ENCODE measurements at regions of chrX and their contacts with region 1.

Region 1: GRCh38 chrX:70433848-70434351 is 10.7 kb upstream of the DLG3 start:
- DNase-seq: peak; percentile 53 to 70
- ATAC-seq: peak; percentile 70 to 84
- H3K4me3 ChIP-seq: peak overlapping the region; percentile 72
- H3K27ac ChIP-seq: peak overlapping the region; percentile 78 to 88
- H3K4me1 ChIP-seq: peaks cover 9% of the 10 kb centered on the region; the same call in 1 of the 3 replicates
- CTCF ChIP-seq: peak; percentile 65
- EP300 ChIP-seq: no peak
- POLR2A ChIP-seq: no peak
- RAD21 ChIP-seq: peak; percentile 50 to 66

Region 2: DNA sequence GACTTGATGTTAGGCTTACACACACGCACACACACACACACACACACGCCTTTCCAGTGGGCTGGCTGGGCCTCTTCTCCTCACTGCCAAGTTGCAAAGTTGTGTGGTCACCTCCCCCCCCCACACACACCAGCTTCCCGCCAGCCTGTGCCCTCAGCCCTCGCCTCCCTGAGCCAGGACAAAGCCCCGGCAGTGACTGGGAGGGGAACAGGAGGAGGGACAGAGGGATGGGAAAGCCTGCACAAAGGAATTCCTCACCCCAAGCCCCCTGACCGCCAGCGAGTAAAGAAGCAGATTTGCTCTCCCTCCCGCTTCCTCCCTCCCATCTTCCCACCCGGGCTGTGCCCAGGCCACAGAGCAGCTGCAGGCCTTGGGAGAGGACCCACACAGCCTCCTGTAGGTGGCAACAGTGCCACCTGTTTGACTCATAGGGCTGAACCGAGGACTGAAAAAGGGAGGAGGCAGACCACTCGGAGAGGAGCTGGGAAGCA is 11.0 kb before region 1 on chrX and contains the start of gene GDPD2:
- CTCF ChIA-PET with region 1: interaction called, 44 read pairs
- POLR2A ChIA-PET with region 1: no interaction called
- DNase-seq: peak in 1 of 2 experiments; percentile 40
- ATAC-seq: peak; percentile 84 to 85
- H3K4me3 ChIP-seq: no peak within 1 kb of the TSS
- H3K27ac ChIP-seq: no peak within 1 kb of the TSS
- H3K4me1 ChIP-seq: no peaks in the 10 kb centered on the region
- CTCF ChIP-seq: peak; percentile 16; the same call in 1 of the 3 replicates
- EP300 ChIP-seq: no peak
- POLR2A ChIP-seq: no peak
- RAD21 ChIP-seq: peak; percentile 20 to 27; a peak in 1 of 5 replicates
- polyA plus RNA-seq, gene GDPD2: 0.04 TPM in 2 replicates

Region 3: DNA sequence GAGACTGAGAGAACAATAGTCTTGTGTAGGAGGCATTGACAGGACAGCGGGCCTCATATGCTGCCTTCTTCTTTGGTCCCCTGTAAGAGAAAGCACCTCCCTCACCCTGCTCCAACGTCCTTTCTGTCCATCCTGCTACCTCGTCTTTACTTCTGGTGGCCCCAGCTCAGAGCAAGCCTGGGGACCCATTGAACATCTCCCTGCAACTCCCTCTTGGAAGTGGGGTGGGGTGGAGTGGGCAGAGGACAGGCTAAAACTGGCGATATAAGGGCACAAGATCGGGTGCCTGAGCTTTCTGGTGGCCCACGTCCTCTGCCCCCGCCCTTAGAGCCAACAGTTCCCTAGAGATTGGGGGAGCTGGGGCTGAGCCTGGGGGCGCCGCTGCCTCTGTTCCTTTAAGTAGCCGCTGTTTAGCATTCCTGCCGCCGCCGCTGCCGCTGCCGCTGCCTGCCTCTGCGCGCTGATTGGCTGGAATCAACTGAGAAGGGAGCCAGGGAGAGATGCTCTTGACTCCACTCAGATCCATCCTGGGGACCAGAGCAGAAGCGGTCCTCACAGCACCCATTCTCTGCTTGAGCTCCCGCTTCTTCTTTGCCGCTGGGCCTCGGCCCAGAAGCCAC is 10.5 kb after region 1 on chrX and contains the start of gene DLG3:
- CTCF ChIA-PET with region 1: interaction called, 27 read pairs
- POLR2A ChIA-PET with region 1: interaction called, 3 read pairs
- DNase-seq: peak; percentile 33 to 42
- ATAC-seq: peak; percentile 72 to 82
- H3K4me3 ChIP-seq: peak within 1 kb of the TSS; percentile 47
- H3K27ac ChIP-seq: peak within 1 kb of the TSS in 1 of 2 experiments; percentile 42; a peak in 3 of 6 replicates
- H3K4me1 ChIP-seq: 0 out of 3 replicates have a peak, but pooled peaks cover 4% of the 10 kb centered on the region
- CTCF ChIP-seq: no peak
- EP300 ChIP-seq: no peak
- POLR2A ChIP-seq: no peak
- RAD21 ChIP-seq: no peak
- polyA plus RNA-seq, gene DLG3: 11.2 and 12.8 TPM in 2 replicates

Region 4: DNA sequence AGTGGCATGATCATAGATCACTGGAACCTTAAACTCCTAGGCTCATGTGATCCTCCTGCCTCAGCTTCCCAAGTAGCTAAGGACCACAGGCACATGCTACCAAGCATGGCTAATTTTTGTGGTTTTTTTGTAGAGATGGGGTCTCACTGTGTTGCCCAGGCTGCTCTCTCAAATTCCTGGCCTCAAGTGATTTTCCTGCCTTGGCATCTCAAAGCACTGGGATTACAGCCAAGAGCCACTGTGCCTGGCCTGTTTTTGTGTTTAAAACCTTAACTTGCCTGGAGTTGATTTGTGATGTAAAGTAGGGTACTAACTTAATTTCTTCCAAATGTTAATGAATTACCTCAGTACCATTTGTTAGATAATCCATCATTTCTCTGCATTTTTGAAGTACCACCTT is 33.1 kb after region 1 on chrX:
- CTCF ChIA-PET with region 1: no interaction called
- POLR2A ChIA-PET with region 1: no interaction called
- DNase-seq: no peak
- ATAC-seq: no peak
- H3K4me3 ChIP-seq: no peak overlapping the region
- H3K27ac ChIP-seq: no peak overlapping the region
- H3K4me1 ChIP-seq: no peaks in the 10 kb centered on the region
- CTCF ChIP-seq: no peak
- EP300 ChIP-seq: no peak
- POLR2A ChIP-seq: no peak
- RAD21 ChIP-seq: no peak

Region 5: GRCh38 chrX:70577442-70577841 is 143.5 kb after region 1 on chrX:
- CTCF ChIA-PET with region 1: no interaction called
- POLR2A ChIA-PET with region 1: no interaction called
- DNase-seq: no peak
- ATAC-seq: no peak
- H3K4me3 ChIP-seq: no peak overlapping the region
- H3K27ac ChIP-seq: no peak overlapping the region
- H3K4me1 ChIP-seq: no peaks in the 10 kb centered on the region
- CTCF ChIP-seq: no peak
- EP300 ChIP-seq: no peak
- POLR2A ChIP-seq: no peak
- RAD21 ChIP-seq: no peak

Region 6: GRCh38 chrX:70960728-70961127 is 526.8 kb after region 1 on chrX:
- CTCF ChIA-PET with region 1: no interaction called
- POLR2A ChIA-PET with region 1: no interaction called
- DNase-seq: peak in 1 of 2 experiments; percentile 16
- ATAC-seq: no peak
- H3K4me3 ChIP-seq: no peak overlapping the region
- H3K27ac ChIP-seq: no peak overlapping the region
- H3K4me1 ChIP-seq: no peaks in the 10 kb centered on the region
- CTCF ChIP-seq: peak; percentile 27; the same call in 2 of the 3 replicates
- EP300 ChIP-seq: no peak
- POLR2A ChIP-seq: no peak
- RAD21 ChIP-seq: peak; percentile 47; a peak in 4 of 5 replicates

Region 7: DNA sequence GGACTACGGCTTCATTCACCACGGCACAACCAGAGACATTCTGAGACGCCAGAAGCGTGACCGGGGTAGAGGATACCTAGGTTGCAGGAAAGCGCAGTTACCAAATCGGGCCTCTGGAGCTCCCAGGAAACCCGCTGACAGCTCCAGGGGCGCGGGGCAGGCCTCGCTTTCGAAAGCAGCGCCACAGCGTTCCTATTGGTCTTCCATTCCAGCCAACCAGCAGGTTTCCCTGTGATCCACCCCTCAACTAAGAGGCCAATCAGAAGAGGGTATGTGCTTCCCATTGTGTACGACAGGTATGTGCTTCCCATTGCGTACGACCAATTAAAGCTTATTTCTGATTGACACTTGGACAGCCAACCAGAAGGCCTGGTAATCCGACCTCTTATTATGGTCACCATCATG is 619.3 kb after region 1 on chrX:
- CTCF ChIA-PET with region 1: no interaction called
- POLR2A ChIA-PET with region 1: no interaction called
- DNase-seq: no peak
- ATAC-seq: no peak
- H3K4me3 ChIP-seq: no peak overlapping the region
- H3K27ac ChIP-seq: no peak overlapping the region
- H3K4me1 ChIP-seq: peaks cover 20% of the 10 kb centered on the region
- CTCF ChIP-seq: no peak
- EP300 ChIP-seq: no peak
- POLR2A ChIP-seq: no peak
- RAD21 ChIP-seq: no peak

Measured in A549 (cell line).